BJ (cell line): ENCODE measurements at regions of chr3 and their contacts with region 1.

Region 1: GRCh38 chr3:47892286-47893040 is 89.5 kb downstream of the DHX30 start:
- DNase-seq: no peak
- H3K4me3 ChIP-seq: no peak overlapping the region
- H3K27me3 ChIP-seq: no peaks in the 10 kb centered on the region
- CTCF ChIP-seq: no peak

Region 2: DNA sequence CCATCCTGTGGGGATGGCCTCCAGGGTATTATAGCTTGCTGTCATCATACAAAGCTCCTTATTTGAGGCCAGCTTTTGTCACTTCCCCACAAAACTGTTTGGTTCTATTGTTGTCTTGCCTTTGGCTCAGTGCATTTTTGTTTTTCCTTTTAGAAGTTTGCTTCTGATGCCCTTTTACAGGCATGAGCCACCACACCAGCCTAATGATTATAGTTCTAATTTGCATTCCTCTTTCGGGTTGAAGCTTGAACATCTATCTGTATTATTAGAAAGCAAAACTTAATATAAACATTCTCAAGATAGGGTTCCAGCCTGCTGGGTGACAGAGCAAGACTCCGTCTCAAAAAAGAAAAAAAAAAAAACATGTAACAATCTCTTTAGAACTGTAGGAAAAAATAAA is 150.5 kb before region 1 on chr3:
- CTCF ChIA-PET with region 1: no interaction called
- POLR2A ChIA-PET with region 1: no interaction called
- DNase-seq: no peak
- H3K4me3 ChIP-seq: no peak overlapping the region
- H3K27me3 ChIP-seq: no peaks in the 10 kb centered on the region
- CTCF ChIP-seq: no peak

Region 3: DNA sequence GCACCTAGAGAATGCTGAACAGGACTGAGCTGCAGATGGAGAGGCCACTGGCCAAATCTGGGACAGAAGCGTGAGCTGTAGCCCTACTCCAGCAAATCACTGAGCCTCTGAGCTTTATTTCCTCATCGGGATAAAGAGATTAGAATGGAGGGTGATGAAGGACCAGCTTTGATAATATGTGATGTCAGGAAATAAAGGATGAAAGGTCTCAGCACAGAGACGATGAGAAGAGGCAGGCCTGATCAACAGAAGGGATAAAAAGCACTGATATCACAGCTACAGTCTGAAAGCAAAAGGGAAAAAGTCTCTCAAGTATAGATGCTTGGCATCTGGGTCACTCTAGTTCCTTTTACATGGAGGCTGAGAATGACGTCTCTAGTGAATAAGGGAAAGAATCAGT is 19.5 kb before region 1 on chr3:
- CTCF ChIA-PET with region 1: interaction called, 10 read pairs
- POLR2A ChIA-PET with region 1: no interaction called
- DNase-seq: no peak
- H3K4me3 ChIP-seq: no peak overlapping the region
- H3K27me3 ChIP-seq: no peaks in the 10 kb centered on the region
- CTCF ChIP-seq: no peak